GM12878 (cell line): ENCODE measurements at regions of chr7 and their contacts with region 1.

Region 1: DNA sequence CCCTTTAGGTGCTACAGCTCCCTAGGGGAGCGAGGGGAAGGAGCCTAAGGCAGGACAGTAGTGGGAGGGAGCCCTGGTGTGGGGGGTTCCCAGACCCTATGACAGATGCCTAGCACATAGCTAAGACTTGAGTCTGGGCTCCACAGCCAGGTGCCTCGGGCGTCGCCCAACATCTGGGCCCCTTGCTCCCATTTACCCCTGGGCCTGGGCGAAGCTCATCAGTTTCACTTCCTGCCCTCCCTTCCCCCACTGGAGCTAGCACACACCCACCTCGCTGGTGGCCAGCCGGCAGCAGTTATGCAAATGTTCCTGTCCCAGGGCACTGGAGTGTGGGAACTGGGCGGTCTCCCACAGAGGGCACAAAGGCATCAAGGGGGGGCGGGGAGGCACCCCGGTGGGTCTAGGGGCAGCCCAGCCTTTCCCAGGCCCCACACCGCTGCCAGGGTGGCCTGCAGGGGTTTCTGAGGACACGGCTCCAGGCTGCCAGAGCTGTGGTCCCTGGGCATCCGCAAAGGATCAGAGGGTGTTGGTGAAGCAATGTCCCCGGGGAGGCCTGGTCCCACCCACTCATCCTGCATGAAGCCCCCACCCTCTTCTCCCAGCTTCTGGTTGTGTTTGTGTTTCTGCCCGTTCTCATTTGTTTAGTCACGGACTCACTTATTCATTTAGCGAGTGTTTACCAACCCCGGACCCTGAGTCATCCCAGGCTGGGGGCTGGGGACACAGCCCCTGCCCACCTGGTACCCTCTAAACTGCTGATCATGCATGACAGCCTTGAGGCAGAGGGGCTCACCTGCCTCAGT is 20.4 kb downstream of the SH2B2 start:
- DNase-seq: peak; percentile 96
- ATAC-seq: peak; percentile 86
- H3K4me3 ChIP-seq: peak overlapping the region; percentile 60
- H3K27ac ChIP-seq: peak overlapping the region; percentile 97
- H3K4me1 ChIP-seq: peaks cover 65% of the 10 kb centered on the region
- H3K27me3 ChIP-seq: no peaks in the 10 kb centered on the region
- CTCF ChIP-seq: no peak
- EP300 ChIP-seq: peak; percentile 91 to 93
- POLR2A ChIP-seq: peak; percentile 79
- RAD21 ChIP-seq: 0 out of 2 replicates have a peak, but pooled peaks have one; percentile 19

Region 2: DNA sequence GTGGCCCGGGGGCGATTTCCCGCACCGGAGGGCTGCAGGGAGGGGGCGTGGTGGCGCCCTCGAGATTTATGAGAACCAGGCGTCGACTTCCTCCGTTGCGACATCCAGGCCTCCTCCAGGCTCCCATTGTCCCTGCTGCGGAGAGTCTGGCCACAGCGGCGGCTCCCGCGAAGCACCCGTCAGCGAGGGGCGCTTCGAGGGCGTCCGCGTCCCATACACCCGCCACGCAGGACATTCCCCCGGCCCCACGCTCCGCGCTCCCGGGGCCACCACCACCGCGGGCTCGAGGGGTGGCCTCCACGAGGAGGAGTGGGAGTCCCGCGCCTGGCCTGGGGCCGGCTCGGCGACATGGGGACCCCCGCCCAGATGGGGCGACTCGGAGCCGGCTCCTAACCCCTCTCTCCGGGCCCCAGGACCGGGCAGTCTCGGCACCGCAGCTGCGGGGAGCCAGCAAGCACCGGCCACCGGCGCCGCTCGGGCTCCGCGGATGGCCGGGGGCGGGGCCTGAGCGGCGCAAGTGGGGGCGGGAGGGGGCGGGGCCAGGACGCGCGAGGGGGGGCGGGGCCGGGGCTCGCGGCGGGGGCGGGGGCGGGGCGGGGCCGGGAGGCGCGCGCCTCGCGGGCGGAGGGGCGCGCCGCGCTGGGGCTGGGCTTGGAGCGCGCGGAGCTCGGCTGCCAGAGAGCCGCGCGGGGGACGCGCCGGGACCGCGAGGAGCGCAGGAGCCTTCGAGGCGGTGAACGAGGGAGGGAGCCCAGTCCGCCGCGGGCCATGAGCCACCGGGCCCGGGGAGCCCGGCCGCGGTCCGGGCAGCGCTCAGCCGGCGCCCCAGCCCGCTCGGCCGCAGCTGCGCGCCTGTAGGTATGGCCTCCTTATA is 20.6 kb before region 1 on chr7 and contains the start of gene SH2B2:
- CTCF ChIA-PET with region 1: interaction called, 62 read pairs
- POLR2A ChIA-PET with region 1: interaction called, 34 read pairs
- RAD21 ChIA-PET with region 1: interaction called, 121 read pairs
- SMC1A ChIA-PET with region 1: interaction called, 91 read pairs
- in situ Hi-C with region 1: no loop called
- intact Hi-C with region 1: loop called (anchors 1 kb)
- DNase-seq: no peak
- ATAC-seq: peak; percentile 30
- H3K4me3 ChIP-seq: peak within 1 kb of the TSS; percentile 80
- H3K27ac ChIP-seq: peak within 1 kb of the TSS; percentile 70
- H3K4me1 ChIP-seq: peaks cover 51% of the 10 kb centered on the region
- H3K27me3 ChIP-seq: no peaks in the 10 kb centered on the region
- CTCF ChIP-seq: no peak
- EP300 ChIP-seq: no peak
- POLR2A ChIP-seq: peak; percentile 67
- RAD21 ChIP-seq: no peak
- polyA plus RNA-seq, gene SH2B2: 0.13 TPM in 1 of 2 experiments, not detected in the other

Region 3: GRCh38 chr7:102292813-102293798 is 14.0 kb before region 1 on chr7:
- CTCF ChIA-PET with region 1: interaction called, 62 read pairs
- POLR2A ChIA-PET with region 1: interaction called, 34 read pairs
- RAD21 ChIA-PET with region 1: interaction called, 121 read pairs
- SMC1A ChIA-PET with region 1: interaction called, 91 read pairs
- in situ Hi-C with region 1: no loop called
- intact Hi-C with region 1: loop called (anchors 1 kb)
- DNase-seq: no peak
- ATAC-seq: no peak
- H3K4me3 ChIP-seq: peak overlapping the region; percentile 57; the same call in 1 of the 2 replicates
- H3K27ac ChIP-seq: 0 out of 2 replicates have a peak overlapping the region, but pooled peaks have one; percentile 31
- H3K4me1 ChIP-seq: peaks cover 74% of the 10 kb centered on the region
- H3K27me3 ChIP-seq: no peaks in the 10 kb centered on the region
- CTCF ChIP-seq: no peak
- EP300 ChIP-seq: no peak
- POLR2A ChIP-seq: no peak
- RAD21 ChIP-seq: no peak

Region 4: DNA sequence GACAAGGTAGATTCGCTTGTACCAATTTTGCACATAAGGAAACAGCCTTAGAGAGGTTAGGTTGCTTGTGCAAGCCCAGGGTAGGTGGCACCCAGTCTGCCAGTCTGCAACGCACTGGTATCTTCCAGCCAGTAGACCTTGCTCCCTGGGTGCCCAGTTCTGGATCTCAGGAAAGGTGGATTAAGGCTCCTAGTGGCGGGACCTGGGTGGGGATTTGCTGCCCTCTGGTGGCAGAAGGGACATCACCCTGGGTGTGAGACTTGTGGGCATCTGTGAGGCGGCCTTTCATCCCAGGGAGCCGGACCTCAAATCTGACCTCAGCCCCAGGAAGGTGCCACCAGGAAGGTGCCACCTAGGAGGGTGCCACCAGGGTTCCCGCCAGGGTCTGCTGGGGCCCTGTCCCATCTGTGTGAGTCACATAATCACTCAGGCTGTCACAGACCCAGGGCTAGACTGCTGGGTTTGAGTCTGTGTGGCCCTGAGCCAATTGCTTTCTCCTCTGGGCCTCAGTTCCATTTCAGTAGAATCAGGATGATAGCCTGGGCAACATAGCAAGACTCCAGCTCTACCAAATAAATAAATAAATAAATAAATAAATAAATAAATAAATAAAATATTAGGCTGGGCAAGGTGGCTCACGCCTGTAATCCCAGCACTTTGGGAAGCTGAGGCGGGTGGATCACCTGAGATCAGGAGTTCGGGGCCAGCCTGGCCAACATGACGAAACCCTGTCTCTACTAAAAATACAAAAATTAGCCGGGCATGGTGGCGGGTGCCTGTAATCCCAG is 83.8 kb after region 1 on chr7:
- CTCF ChIA-PET with region 1: interaction called, 6 read pairs
- POLR2A ChIA-PET with region 1: no interaction called
- RAD21 ChIA-PET with region 1: interaction called, 15 read pairs
- SMC1A ChIA-PET with region 1: interaction called, 7 read pairs
- in situ Hi-C with region 1: no loop called
- intact Hi-C with region 1: no loop called
- DNase-seq: no peak
- ATAC-seq: peak; percentile 92
- H3K4me3 ChIP-seq: no peak overlapping the region
- H3K27ac ChIP-seq: no peak overlapping the region
- H3K4me1 ChIP-seq: peaks cover 16% of the 10 kb centered on the region
- H3K27me3 ChIP-seq: no peaks in the 10 kb centered on the region
- CTCF ChIP-seq: peak; percentile 89 to 93 (median 91)
- EP300 ChIP-seq: no peak
- POLR2A ChIP-seq: no peak; the same call in 1 of the 2 replicates
- RAD21 ChIP-seq: peak; percentile 91

Region 5: GRCh38 chr7:102396027-102397019 is 89.2 kb after region 1 on chr7 and contains the start of gene PRKRIP1:
- CTCF ChIA-PET with region 1: interaction called, 4 read pairs
- POLR2A ChIA-PET with region 1: no interaction called
- RAD21 ChIA-PET with region 1: interaction called, 15 read pairs
- SMC1A ChIA-PET with region 1: no interaction called
- in situ Hi-C with region 1: no loop called
- intact Hi-C with region 1: no loop called
- DNase-seq: peak; percentile 96
- ATAC-seq: peak; percentile 99
- H3K4me3 ChIP-seq: peak within 1 kb of the TSS; percentile 97
- H3K27ac ChIP-seq: peak within 1 kb of the TSS; percentile 88
- H3K4me1 ChIP-seq: peaks cover 10% of the 10 kb centered on the region
- H3K27me3 ChIP-seq: no peaks in the 10 kb centered on the region
- CTCF ChIP-seq: no peak
- EP300 ChIP-seq: peak; percentile 17 to 62; a peak in 1 of 4 replicates
- POLR2A ChIP-seq: peak; percentile 86
- RAD21 ChIP-seq: no peak
- polyA plus RNA-seq, gene PRKRIP1: 17.0 to 18.3 TPM